MCF 10A (cell line): ENCODE measurements at regions of chr5 and their contacts with region 1.

Region 1: DNA sequence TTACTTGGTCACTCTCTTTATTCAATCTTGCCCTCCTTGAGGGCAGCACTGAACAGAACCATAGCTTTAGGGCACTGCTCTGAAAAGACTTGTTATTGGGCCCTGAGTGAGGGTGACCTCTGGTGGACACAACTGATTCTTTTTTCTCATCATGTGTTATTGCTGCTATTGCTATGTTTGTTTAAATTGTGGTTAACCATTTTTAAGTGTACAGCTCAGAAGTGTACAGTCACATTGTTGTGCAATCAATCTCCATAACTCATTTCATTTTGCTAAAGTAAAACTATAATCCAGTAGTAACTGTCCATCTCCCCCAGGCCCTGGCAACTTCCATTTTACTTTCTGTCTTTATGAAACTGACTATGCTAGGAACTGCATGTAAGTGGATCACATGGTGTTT is 351.1 kb upstream of the RIOK2 start:
- DNase-seq: peak; percentile 87
- H3K4me3 Mint-ChIP-seq: no peak overlapping the region
- H3K27ac Mint-ChIP-seq: peak overlapping the region; percentile 4
- H3K4me1 Mint-ChIP-seq: peaks cover 17% of the 10 kb centered on the region
- H3K27me3 Mint-ChIP-seq: no peaks in the 10 kb centered on the region
- CTCF ChIP-seq: peak; percentile 72

Region 2: GRCh38 chr5:97231025-97231636 is 303.0 kb before region 1 on chr5:
- CTCF ChIA-PET with region 1: interaction called, 37 read pairs
- POLR2A ChIA-PET with region 1: interaction called, 5 read pairs
- intact Hi-C with region 1: loop called (anchors 1 kb)
- DNase-seq: peak; percentile 77
- H3K4me3 Mint-ChIP-seq: no peak overlapping the region
- H3K27ac Mint-ChIP-seq: no peak overlapping the region
- H3K4me1 Mint-ChIP-seq: peaks cover 7% of the 10 kb centered on the region
- H3K27me3 Mint-ChIP-seq: no peaks in the 10 kb centered on the region
- CTCF ChIP-seq: peak; percentile 75

Region 3: GRCh38 chr5:97488126-97488668 is 46.0 kb before region 1 on chr5:
- CTCF ChIA-PET with region 1: interaction called, 10 read pairs
- POLR2A ChIA-PET with region 1: no interaction called
- intact Hi-C with region 1: no loop called
- DNase-seq: no peak
- H3K4me3 Mint-ChIP-seq: no peak overlapping the region
- H3K27ac Mint-ChIP-seq: no peak overlapping the region
- H3K4me1 Mint-ChIP-seq: no peaks in the 10 kb centered on the region
- H3K27me3 Mint-ChIP-seq: no peaks in the 10 kb centered on the region
- CTCF ChIP-seq: no peak

Region 4: DNA sequence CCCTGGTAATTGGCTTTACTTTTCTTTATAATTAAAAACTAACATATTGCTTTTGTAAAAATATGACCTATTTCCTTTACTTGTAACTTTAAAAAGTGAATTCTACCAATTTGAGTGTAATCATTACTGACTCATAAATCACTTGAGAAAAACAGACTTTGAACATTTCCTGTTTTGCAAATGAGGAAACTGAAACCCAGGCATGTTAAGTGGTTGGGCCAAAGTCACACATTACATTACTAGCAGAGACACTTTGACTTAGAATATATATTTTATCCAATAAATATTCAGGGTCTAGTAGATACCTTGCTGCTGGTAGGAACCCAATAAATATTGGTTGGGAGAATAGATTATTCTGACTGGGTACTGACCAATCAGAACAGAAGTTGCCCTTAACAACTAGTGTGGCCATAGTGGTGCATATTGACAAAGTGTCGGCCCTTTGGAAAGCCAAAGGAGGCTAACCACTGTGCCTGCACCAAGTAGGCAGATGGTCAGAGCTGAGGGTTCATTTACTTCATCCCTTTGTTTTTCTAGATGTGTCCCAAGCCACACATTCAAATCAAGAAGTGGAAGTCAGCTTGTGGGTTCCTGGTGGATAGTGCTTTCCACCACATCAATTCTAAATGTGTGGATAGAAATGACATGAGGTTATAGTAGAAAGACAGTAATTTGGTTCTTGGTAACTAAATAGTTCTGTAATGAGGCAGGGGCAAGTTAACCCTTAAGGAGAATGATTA is 14.0 kb after region 1 on chr5:
- CTCF ChIA-PET with region 1: interaction called, 18 read pairs
- POLR2A ChIA-PET with region 1: interaction called, 4 read pairs
- intact Hi-C with region 1: no loop called
- DNase-seq: peak; percentile 5
- H3K4me3 Mint-ChIP-seq: no peak overlapping the region
- H3K27ac Mint-ChIP-seq: no peak overlapping the region
- H3K4me1 Mint-ChIP-seq: no peaks in the 10 kb centered on the region
- H3K27me3 Mint-ChIP-seq: no peaks in the 10 kb centered on the region
- CTCF ChIP-seq: no peak

Region 5: DNA sequence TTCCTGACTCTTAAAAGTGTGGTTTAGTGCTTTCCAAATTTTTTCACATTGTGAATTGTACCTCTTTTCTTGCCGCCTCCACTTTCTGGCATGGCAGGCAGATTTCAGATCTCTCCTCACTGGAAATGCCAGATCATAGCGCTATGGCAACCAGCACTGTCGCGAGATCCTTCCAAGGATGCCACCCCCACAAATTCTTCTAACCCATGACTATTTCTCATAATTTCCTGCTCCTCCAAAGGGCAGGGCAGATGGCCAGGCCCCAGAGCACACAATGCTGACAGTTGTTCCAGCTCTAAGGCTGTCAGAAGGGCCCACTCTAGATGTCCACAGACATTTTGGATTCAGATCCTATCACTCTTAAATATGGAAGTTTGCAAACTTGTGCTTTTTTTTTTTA is 95.1 kb after region 1 on chr5:
- CTCF ChIA-PET with region 1: no interaction called
- POLR2A ChIA-PET with region 1: no interaction called
- intact Hi-C with region 1: no loop called
- DNase-seq: peak; percentile 7
- H3K4me3 Mint-ChIP-seq: no peak overlapping the region
- H3K27ac Mint-ChIP-seq: no peak overlapping the region
- H3K4me1 Mint-ChIP-seq: peaks cover 6% of the 10 kb centered on the region
- H3K27me3 Mint-ChIP-seq: no peaks in the 10 kb centered on the region
- CTCF ChIP-seq: no peak

Region 6: GRCh38 chr5:97726106-97726505 is 191.9 kb after region 1 on chr5:
- CTCF ChIA-PET with region 1: no interaction called
- POLR2A ChIA-PET with region 1: no interaction called
- intact Hi-C with region 1: no loop called
- DNase-seq: no peak
- H3K4me3 Mint-ChIP-seq: no peak overlapping the region
- H3K27ac Mint-ChIP-seq: no peak overlapping the region
- H3K4me1 Mint-ChIP-seq: no peaks in the 10 kb centered on the region
- H3K27me3 Mint-ChIP-seq: no peaks in the 10 kb centered on the region
- CTCF ChIP-seq: no peak

Region 7: DNA sequence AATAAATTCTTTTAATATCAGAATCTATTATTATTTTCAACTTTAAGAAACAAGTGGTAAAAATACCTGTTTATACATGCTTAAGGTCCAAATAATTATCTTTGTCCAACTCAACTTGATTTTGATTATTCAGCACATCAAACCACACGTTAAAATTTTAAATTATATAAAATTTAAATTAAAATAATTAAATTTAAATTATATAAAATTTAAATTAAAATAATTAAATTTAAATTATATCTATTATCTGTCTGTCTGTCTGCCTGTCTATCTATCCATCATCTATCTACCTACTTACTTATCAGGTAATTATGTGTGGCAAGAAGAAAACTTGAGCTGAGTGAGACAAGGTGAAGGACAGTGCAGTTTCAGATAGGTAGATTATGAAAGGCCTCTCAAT is 254.2 kb after region 1 on chr5:
- CTCF ChIA-PET with region 1: no interaction called
- POLR2A ChIA-PET with region 1: no interaction called
- intact Hi-C with region 1: no loop called
- DNase-seq: no peak
- H3K4me3 Mint-ChIP-seq: no peak overlapping the region
- H3K27ac Mint-ChIP-seq: no peak overlapping the region
- H3K4me1 Mint-ChIP-seq: no peaks in the 10 kb centered on the region
- H3K27me3 Mint-ChIP-seq: no peaks in the 10 kb centered on the region
- CTCF ChIP-seq: no peak

Region 8: GRCh38 chr5:97986069-97986468 is 451.9 kb after region 1 on chr5:
- CTCF ChIA-PET with region 1: no interaction called
- POLR2A ChIA-PET with region 1: no interaction called
- intact Hi-C with region 1: loop called (anchors 10 kb)
- DNase-seq: peak; percentile 55
- H3K4me3 Mint-ChIP-seq: no peak overlapping the region
- H3K27ac Mint-ChIP-seq: no peak overlapping the region
- H3K4me1 Mint-ChIP-seq: no peaks in the 10 kb centered on the region
- H3K27me3 Mint-ChIP-seq: no peaks in the 10 kb centered on the region
- CTCF ChIP-seq: no peak

Region 9: DNA sequence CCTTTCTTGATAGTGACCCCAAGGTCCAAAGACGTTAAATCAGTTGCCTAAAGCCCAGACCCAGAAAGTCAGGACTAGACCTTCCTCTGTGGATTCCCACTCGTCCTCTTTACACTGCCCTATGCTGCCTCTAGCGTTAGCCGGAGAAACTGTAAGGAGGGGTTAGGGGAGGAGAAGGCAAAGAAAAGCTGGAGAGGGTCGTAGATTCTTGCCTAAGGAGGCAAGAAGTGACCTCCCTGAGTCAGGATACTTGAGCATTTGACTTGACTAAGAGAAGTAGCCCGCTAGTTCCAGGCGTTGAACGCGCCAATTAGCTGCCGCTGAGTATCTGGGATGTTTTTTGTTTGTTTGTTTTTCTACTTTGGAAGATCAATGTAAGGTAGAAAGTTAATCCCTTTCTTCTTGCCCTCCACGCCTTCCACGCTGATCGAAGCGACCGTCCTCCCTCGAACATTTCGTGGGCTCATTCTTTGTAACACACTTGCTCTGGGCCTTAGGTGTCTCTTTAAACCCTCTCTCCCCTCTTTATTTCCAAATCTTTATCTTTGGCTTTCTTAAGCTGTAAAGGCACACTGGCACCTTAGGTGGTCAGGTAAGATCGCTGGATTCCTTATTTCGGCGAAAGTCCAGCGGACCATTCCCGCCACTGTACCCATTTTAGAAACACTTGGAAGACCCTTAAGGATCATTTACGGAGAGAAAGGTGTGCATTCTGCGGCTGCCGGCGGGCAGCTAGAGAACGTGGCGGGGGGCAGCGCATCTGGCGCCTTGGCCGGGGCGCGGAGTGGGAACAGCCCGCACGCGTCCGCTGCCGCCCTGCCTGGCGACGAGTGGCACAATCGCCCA is 1234.2 kb after region 1 on chr5:
- CTCF ChIA-PET with region 1: interaction called, 43 read pairs
- POLR2A ChIA-PET with region 1: interaction called, 4 read pairs
- intact Hi-C with region 1: loop called (anchors 1 kb)
- DNase-seq: peak; percentile 67
- H3K4me3 Mint-ChIP-seq: peak overlapping the region; percentile 95
- H3K27ac Mint-ChIP-seq: no peak overlapping the region
- H3K4me1 Mint-ChIP-seq: peaks cover 20% of the 10 kb centered on the region
- H3K27me3 Mint-ChIP-seq: no peaks in the 10 kb centered on the region
- CTCF ChIP-seq: peak; percentile 92